ENCODE measurements at regions of chr10 and their contacts with region 1.

Region 1: GRCh38 chr10:6401562-6402348 is 178.3 kb downstream of the PRKCQ start:
- DNase-seq: peak; percentile 47
- H3K4me3 Mint-ChIP-seq: no peak overlapping the region
- H3K27ac Mint-ChIP-seq: no peak overlapping the region
- H3K4me1 Mint-ChIP-seq: peaks cover 37% of the 10 kb centered on the region
- H3K27me3 Mint-ChIP-seq: peaks cover 11% of the 10 kb centered on the region

Region 2: DNA sequence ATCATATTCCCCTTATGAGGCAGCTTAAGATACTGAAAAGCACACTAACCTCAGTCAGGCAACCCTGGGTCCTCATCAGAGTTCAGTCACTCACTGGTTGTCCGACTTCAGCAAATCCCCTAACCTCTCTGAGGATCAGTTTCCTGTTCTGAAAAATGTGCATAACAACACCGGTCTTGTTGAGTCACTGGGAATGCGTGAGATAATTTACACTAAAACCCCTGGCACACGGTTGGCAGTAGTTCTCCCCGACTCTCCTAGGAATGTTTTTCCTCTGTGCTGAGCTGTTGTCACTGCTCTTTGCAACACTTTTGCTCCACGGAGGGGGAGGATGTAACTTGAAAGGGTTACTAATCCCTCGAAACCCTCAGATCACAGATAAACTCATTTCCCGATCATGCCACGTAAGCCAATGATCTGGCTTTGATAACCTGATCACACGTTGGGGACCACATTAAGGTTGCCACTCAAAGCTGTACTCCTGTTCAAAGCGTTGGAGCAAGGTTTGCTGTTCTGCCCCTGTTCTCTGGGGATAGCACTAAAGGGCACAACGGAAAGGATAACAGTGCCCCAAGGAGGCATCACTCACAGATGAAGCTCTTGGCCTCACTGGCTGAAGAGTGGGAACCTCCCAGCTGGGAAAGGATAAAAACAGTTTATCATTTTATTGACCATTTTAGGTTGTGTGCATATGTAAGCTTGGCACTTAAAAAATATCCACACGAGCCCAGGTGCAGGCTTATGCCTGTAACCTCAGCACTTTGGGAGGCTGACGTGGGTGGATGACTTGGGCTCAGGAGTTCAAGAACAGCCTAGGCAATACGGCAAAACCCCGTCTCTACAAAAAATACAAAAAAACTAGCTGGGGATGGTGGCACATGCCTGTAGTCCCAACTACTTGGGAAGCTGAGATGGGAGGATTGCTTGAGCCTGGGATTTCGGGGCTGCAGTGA is 318.0 kb before region 1 on chr10:
- intact Hi-C with region 1: loop called (anchors 1 kb)
- DNase-seq: peak; percentile 67
- H3K4me3 Mint-ChIP-seq: peak overlapping the region; percentile 82
- H3K27ac Mint-ChIP-seq: peak overlapping the region; percentile 92
- H3K4me1 Mint-ChIP-seq: peaks cover 73% of the 10 kb centered on the region
- H3K27me3 Mint-ChIP-seq: no peaks in the 10 kb centered on the region

Region 3: GRCh38 chr10:6108603-6109443 is 292.9 kb before region 1 on chr10:
- intact Hi-C with region 1: loop called (anchors 1 kb)
- DNase-seq: no peak
- H3K4me3 Mint-ChIP-seq: no peak overlapping the region
- H3K27ac Mint-ChIP-seq: peak overlapping the region; percentile 77
- H3K4me1 Mint-ChIP-seq: peaks cover 30% of the 10 kb centered on the region
- H3K27me3 Mint-ChIP-seq: no peaks in the 10 kb centered on the region

Region 4: GRCh38 chr10:6348096-6348874 is 53.5 kb before region 1 on chr10:
- intact Hi-C with region 1: loop called (anchors 2 kb)
- DNase-seq: peak; percentile 67
- H3K4me3 Mint-ChIP-seq: peak overlapping the region; percentile 78
- H3K27ac Mint-ChIP-seq: peak overlapping the region; percentile 96
- H3K4me1 Mint-ChIP-seq: peaks cover 54% of the 10 kb centered on the region
- H3K27me3 Mint-ChIP-seq: no peaks in the 10 kb centered on the region

Measured in activated T-helper 2 cell treated with anti-CD3 and anti-CD28 coated beads, Interferon-gamma antibody, Interleukin-2, Interleukin-4, amounts not matched to agents 10 μg/mL and 5 μg/mL and 100 μg/mL, durations not matched to agents 14 hours and 24 hours and 36 hours (primary cell).